Activated CD4-positive, alpha-beta memory T cell treated with anti-CD3 and anti-CD28 coated beads, Interleukin-2, amount 10 ng/mL, durations not matched to agents 7 days and 5 days (primary cell): ENCODE measurements at regions of chr11 and their contacts with region 1.

Region 1: DNA sequence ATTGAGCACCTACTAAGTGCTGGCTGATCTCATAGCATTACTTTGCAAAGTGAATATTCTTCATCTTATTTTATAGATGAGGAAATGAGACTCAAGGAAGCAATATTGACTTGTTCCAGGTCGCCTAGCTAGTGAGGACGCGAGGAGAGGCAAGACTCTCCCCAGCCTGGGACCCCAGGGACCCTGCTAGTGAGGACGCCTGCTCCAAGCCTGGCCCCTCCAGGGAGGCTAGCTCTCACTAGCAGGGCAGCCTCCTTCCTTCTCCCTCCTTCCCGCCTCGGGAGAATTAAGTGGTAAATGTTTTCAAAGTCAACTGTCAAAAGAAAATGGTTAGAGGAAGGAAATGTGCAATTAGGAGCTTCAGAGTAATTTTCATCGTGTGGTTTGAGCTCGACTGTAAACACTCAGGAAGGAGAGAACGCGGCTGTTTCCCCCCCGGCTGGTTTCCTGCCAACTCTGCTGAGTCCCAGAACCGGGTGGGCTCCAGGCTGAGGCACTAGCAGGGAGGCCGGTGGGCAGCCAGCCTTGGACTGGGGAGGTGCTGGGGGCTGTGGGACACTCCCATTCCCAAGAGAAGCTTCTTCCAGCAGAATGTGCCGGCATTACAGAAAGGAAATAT is 17.9 kb downstream of the MYEOV start:
- DNase-seq: peak; percentile 44
- H3K4me3 Mint-ChIP-seq: peak overlapping the region; percentile 0
- H3K27ac Mint-ChIP-seq: peak overlapping the region; percentile 78
- H3K4me1 Mint-ChIP-seq: peaks cover 20% of the 10 kb centered on the region
- H3K27me3 Mint-ChIP-seq: peaks cover 10% of the 10 kb centered on the region

Region 2: GRCh38 chr11:69296890-69297786 is 14.7 kb before region 1 on chr11:
- CTCF ChIA-PET with region 1: interaction called, 10 read pairs
- POLR2A ChIA-PET with region 1: interaction called, 40 read pairs
- DNase-seq: peak; percentile 91
- H3K4me3 Mint-ChIP-seq: peak overlapping the region; percentile 65
- H3K27ac Mint-ChIP-seq: peak overlapping the region; percentile 78
- H3K4me1 Mint-ChIP-seq: peaks cover 79% of the 10 kb centered on the region
- H3K27me3 Mint-ChIP-seq: no peaks in the 10 kb centered on the region

Region 3: DNA sequence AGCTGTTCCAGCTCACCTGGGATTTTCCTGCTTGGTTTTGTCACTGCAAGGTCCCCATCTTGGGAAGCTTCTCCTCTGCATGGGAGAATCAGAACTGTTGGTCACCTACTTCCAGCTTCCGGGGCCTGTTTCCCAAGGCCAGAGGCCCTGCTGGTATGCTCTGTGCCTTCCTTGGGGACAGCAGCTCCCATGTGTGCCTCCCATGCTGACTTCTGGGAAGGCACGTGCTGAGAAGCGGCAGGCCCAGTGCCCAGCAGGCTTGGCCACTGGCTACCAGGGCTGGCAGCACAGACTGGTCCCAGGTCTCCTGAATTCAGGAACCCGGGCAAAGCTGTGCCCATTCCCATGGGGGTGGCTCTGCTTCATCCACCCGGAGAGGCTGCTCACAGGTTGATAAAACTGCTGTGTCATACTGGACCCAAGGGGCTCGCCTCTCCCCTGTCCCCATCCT is 15.9 kb after region 1 on chr11:
- CTCF ChIA-PET with region 1: no interaction called
- POLR2A ChIA-PET with region 1: no interaction called
- DNase-seq: no peak
- H3K4me3 Mint-ChIP-seq: no peak overlapping the region
- H3K27ac Mint-ChIP-seq: no peak overlapping the region
- H3K4me1 Mint-ChIP-seq: no peaks in the 10 kb centered on the region
- H3K27me3 Mint-ChIP-seq: peaks cover 21% of the 10 kb centered on the region